Activated T-helper 2 cell treated with anti-CD3 and anti-CD28 coated beads, Interferon-gamma antibody, Interleukin-2, Interleukin-4, amounts not matched to agents 10 μg/mL and 5 μg/mL and 100 μg/mL, durations not matched to agents 14 hours and 24 hours and 36 hours (primary cell): ENCODE measurements at regions of chr9 and their contacts with region 1.

Region 1: DNA sequence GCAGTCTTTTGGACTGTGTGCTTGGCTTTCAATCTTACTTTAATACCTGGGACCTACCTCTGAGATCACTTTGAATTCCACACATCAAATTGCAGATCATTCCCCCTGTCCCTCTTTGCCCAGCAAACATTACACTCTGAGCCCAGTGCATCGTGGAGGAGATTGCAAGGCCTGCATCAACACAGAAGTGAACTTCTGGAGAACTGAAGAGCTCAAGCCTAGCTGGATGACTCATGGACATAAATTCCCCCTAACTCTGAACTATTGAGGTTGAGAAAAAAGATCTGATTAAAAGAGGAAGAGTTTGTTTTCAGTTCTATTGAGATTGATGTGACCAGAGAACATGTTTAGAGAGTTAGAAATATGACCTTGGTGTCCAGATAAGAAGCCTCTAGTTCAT is 316.0 kb upstream of the DMAC1 start:
- DNase-seq: peak; percentile 8
- H3K4me3 Mint-ChIP-seq: peak overlapping the region; percentile 35
- H3K27ac Mint-ChIP-seq: peak overlapping the region; percentile 88
- H3K4me1 Mint-ChIP-seq: peaks cover 27% of the 10 kb centered on the region
- H3K27me3 Mint-ChIP-seq: no peaks in the 10 kb centered on the region

Region 2: DNA sequence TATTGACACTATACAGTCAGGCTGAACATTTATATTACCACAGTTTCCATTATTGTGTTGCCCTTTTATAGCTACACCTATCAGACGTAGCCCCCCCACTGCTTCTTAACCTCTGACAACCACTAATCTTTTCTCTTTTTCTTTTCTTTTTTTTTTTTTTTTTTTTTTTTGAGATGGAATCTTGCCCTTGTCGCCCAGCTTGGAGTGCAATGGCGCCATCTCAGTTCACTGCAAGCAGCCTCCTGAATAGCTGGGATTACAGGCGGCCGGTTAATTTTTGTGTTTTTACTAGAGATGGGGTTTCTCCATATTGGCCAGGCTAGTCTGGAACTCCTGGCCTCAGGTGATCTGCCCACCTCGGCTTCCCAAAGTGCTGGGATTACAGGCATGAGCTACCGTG is 1627.2 kb before region 1 on chr9:
- intact Hi-C with region 1: no loop called
- DNase-seq: no peak
- H3K4me3 Mint-ChIP-seq: no peak overlapping the region
- H3K27ac Mint-ChIP-seq: no peak overlapping the region
- H3K4me1 Mint-ChIP-seq: peaks cover 5% of the 10 kb centered on the region
- H3K27me3 Mint-ChIP-seq: no peaks in the 10 kb centered on the region

Region 3: GRCh38 chr9:6894135-6894534 is 1221.4 kb before region 1 on chr9:
- intact Hi-C with region 1: loop called (anchors 10 kb)
- DNase-seq: no peak
- H3K4me3 Mint-ChIP-seq: peak overlapping the region; percentile 19
- H3K27ac Mint-ChIP-seq: peak overlapping the region; percentile 74
- H3K4me1 Mint-ChIP-seq: peaks cover 51% of the 10 kb centered on the region
- H3K27me3 Mint-ChIP-seq: no peaks in the 10 kb centered on the region

Region 4: GRCh38 chr9:7536310-7536939 is 579.1 kb before region 1 on chr9:
- intact Hi-C with region 1: loop called (anchors 5 kb)
- DNase-seq: peak; percentile 29
- H3K4me3 Mint-ChIP-seq: no peak overlapping the region
- H3K27ac Mint-ChIP-seq: no peak overlapping the region
- H3K4me1 Mint-ChIP-seq: peaks cover 37% of the 10 kb centered on the region
- H3K27me3 Mint-ChIP-seq: peaks cover 10% of the 10 kb centered on the region

Region 5: GRCh38 chr9:8188720-8189407 is 73.3 kb after region 1 on chr9:
- intact Hi-C with region 1: loop called (anchors 1 kb)
- DNase-seq: no peak
- H3K4me3 Mint-ChIP-seq: no peak overlapping the region
- H3K27ac Mint-ChIP-seq: peak overlapping the region; percentile 46
- H3K4me1 Mint-ChIP-seq: peaks cover 18% of the 10 kb centered on the region
- H3K27me3 Mint-ChIP-seq: no peaks in the 10 kb centered on the region

Region 6: GRCh38 chr9:8429768-8430167 is 314.2 kb after region 1 on chr9:
- intact Hi-C with region 1: loop called (anchors 1 kb)
- DNase-seq: no peak
- H3K4me3 Mint-ChIP-seq: no peak overlapping the region
- H3K27ac Mint-ChIP-seq: peak overlapping the region; percentile 78
- H3K4me1 Mint-ChIP-seq: peaks cover 40% of the 10 kb centered on the region
- H3K27me3 Mint-ChIP-seq: no peaks in the 10 kb centered on the region